Activated CD4-positive, alpha-beta memory T cell treated with anti-CD3 and anti-CD28 coated beads for 36 hours (primary cell): ENCODE measurements at regions of chr1 and their contacts with region 1.

Region 1: DNA sequence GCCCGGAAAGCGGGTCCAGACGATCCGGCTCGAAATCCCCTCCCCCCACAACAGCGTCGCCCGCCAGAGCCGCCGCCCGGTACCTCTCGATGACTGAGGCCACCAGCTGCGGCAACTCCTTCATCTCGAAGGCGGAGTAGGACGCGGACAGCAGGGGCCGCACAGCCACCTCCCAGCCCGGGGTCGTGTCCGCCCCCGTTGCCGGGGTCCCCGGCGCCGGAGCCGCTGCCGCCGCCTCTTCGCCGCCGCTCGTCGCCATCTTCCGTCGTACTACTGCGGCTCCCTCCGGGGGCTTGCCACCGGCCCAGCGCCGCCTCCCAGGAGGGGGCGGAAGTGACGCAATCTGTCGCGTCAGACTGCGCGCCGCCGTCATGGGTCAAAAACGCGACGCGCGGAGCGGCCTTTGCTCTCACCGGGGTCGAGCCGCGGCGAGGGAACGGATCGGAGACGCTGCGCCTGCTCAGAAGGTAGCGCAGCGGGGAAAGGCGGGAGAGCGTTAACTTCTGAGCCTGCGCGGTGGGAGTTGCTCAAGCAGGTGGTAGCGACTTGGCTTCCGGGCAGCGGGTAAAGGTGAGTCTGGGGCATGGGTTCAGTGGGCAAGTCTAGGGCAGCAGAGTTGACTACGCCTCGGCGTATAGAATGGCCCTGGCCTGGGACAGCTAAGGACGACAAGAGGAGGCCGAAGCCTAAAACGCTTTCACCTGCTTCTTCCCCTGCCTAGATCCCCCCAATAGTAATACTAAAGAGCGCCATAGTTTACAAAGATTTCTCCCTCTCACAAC is at the start of gene UBR4:
- DNase-seq: peak; percentile 98
- H3K4me3 Mint-ChIP-seq: peak within 1 kb of the TSS; percentile 94
- H3K27ac Mint-ChIP-seq: peak within 1 kb of the TSS; percentile 96
- H3K4me1 Mint-ChIP-seq: peaks cover 68% of the 10 kb centered on the region
- H3K27me3 Mint-ChIP-seq: no peaks in the 10 kb centered on the region
- total RNA-seq, gene UBR4: 104 to 116 TPM

Region 2: DNA sequence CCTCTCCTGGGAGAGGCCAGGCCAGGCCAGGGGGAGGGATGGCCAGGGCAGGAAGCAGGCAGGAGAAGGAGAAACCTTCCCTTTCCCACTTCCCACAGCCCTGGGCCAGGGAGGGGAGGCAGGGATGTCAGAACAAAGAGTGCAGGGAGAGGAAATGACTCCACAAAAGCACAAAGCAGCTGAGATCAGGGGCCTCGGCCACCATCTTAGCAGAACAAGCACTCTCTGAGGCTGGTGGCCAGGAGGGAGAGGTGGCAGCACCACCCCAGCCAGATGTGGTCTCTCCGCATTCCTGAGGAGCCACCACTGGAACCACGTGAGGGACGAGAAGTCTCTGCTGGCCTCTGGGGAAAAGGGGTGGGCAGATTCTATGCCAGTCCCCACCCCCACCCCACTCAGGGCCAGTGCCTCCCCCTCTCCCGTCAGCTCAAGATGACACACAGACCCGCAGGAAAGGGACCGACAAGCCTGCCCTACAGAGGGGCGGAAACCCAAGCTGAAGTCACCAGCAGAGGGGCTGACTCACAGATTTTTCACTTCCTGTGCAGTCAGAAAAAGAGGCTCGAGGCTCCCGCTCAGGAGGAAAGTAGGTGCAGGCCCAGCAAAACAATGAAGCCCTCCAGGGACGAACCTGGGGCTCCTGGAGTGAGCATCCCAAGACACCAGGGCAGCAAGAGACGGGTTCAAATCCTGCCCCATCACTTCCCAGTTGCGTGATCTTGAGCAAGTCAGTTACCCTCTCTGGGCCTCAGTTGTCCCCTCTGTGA is 283.7 kb before region 1 on chr1:
- CTCF ChIA-PET with region 1: no interaction called
- POLR2A ChIA-PET with region 1: interaction called, 6 read pairs
- intact Hi-C with region 1: loop called (anchors 5 kb)
- DNase-seq: peak; percentile 94
- H3K4me3 Mint-ChIP-seq: peak overlapping the region; percentile 79
- H3K27ac Mint-ChIP-seq: peak overlapping the region; percentile 100
- H3K4me1 Mint-ChIP-seq: peaks cover 79% of the 10 kb centered on the region
- H3K27me3 Mint-ChIP-seq: no peaks in the 10 kb centered on the region

Region 3: DNA sequence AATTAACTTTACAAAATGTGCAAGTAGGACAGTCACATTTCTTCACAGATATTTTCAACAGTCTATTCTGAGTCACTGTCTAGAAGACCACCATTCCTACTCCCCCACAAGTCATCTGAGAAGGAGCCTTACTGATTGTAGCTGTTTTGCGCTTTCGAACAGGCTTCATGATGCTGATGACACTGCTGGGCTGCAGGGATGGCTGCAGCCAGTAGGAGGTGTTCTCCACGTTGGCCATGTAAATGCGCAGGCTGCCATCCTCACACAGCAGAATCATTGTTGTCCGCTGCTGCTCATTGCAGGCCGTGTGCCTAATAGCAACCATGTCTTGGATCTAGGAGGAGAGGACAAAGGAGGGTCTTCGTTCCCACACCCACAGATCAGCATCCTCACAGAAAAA is 57.0 kb before region 1 on chr1:
- CTCF ChIA-PET with region 1: no interaction called
- POLR2A ChIA-PET with region 1: no interaction called
- intact Hi-C with region 1: no loop called
- DNase-seq: no peak
- H3K4me3 Mint-ChIP-seq: no peak overlapping the region
- H3K27ac Mint-ChIP-seq: no peak overlapping the region
- H3K4me1 Mint-ChIP-seq: no peaks in the 10 kb centered on the region
- H3K27me3 Mint-ChIP-seq: no peaks in the 10 kb centered on the region

Region 4: GRCh38 chr1:19179597-19180264 is 30.4 kb before region 1 on chr1:
- CTCF ChIA-PET with region 1: interaction called, 6 read pairs
- POLR2A ChIA-PET with region 1: interaction called, 3 read pairs
- intact Hi-C with region 1: loop called (anchors 5 kb)
- DNase-seq: peak; percentile 34
- H3K4me3 Mint-ChIP-seq: no peak overlapping the region
- H3K27ac Mint-ChIP-seq: peak overlapping the region; percentile 26
- H3K4me1 Mint-ChIP-seq: peaks cover 16% of the 10 kb centered on the region
- H3K27me3 Mint-ChIP-seq: no peaks in the 10 kb centered on the region

Region 5: DNA sequence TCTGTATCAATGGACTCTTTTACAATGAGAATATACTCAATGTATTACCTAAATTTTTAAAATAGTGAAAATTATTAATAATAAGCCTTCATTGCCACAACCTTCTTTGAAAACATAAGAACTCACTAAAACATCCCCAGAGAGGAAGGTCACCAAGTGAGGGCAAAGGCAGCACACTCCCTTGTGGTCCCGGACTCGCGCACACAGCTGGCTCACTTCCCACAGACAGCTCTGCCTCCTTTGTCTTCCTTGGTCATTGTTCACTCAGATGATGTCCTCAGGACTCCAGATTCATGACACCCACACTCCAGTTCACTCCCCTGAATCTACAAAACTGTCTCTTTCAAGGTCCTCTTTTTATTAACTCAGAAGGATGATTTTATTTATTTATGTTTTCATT is 19.0 kb after region 1 on chr1:
- CTCF ChIA-PET with region 1: no interaction called
- POLR2A ChIA-PET with region 1: no interaction called
- intact Hi-C with region 1: no loop called
- DNase-seq: no peak
- H3K4me3 Mint-ChIP-seq: no peak overlapping the region
- H3K27ac Mint-ChIP-seq: peak overlapping the region; percentile 11
- H3K4me1 Mint-ChIP-seq: peaks cover 5% of the 10 kb centered on the region
- H3K27me3 Mint-ChIP-seq: no peaks in the 10 kb centered on the region

Region 6: DNA sequence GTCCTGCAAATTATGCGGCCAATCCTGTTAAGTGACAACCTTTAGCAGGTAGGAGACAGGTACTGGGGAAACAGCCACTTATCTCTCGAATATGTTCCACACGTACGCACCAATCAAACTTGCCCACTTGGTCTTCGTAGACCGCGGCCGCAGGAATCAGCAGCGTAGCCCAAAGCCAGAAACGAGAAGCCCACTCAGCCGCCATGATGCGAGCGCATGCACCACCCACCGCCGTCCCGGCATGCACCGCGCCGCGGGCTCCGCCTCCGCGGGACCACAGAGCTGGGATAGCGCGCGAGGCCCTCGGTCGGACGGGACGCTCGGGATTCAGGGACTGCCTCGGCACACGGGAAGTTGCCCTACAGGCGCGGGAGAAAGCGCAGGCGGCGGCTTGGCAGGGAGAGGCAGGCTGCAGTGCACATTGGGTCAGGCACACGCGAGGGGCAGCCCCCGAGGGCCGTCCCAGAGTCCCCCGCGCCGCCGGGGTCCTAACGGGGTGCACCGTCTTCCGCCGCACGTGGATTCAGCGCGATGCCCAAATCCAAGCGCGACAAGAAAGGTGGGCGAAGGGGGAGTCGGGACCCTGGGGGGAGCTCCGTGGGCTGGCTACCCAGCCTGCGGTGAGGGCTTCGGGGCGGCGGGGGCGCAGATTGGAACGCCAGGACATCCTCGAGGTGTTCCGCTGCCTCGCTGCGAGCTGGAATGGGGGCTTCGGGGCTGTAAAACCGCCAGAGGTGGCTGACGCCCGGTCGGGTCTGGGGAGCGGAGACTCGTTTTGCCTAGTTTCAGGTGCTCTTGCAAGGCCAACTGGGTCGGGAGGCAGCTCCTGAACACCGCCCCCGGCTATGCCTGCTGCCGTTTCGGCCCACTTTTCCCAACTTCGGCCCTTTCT is 41.4 kb after region 1 on chr1 and contains the starts of genes EMC1 and MRTO4:
- CTCF ChIA-PET with region 1: interaction called, 4 read pairs
- POLR2A ChIA-PET with region 1: interaction called, 19 read pairs
- intact Hi-C with region 1: loop called (anchors 1 kb)
- DNase-seq: peak; percentile 92
- H3K4me3 Mint-ChIP-seq: peak within 1 kb of the TSS; percentile 98
- H3K27ac Mint-ChIP-seq: peak within 1 kb of the TSS; percentile 95
- H3K4me1 Mint-ChIP-seq: peaks cover 43% of the 10 kb centered on the region
- H3K27me3 Mint-ChIP-seq: no peaks in the 10 kb centered on the region
- total RNA-seq, gene EMC1: 46.6 to 49.3 TPM
- total RNA-seq, gene MRTO4: 83.0 to 83.8 TPM

Region 7: DNA sequence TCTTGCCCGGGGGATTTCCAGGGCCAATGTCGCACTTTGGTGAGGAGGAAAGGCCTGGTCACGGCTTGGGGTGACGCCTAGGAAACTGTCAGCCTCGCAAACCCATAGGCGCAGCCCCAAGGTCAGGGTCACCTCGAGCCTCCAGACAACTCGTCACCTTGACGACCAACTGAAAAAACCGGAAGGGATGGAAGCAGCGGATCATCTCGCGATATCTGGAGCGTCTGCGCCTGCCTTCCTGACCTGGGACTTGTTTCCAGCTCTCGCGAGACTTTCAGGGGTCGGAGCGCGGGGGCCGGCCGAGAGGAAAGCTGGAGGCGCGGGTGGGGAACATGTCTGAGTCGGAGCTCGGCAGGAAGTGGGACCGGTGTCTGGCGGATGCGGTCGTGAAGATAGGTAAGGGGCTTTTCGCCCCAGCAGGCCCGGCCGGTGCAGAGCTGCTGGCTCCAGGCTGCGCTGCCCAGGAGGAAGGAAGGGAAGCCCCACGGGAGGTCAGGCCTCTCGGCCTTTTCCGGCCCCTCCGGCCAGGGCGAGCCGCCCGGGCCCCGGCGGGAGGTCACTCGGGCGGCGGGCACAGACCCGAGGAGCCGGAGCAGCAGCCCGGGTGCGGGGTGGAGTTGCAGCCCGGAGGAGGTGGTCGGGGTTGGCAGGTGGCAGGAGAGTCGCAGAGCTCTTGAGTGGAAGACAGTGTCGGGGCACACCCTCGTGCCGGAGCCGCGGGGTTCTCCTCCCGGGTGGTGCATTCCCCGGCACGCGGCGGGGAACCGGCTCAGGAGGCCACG is 386.7 kb after region 1 on chr1:
- CTCF ChIA-PET with region 1: no interaction called
- POLR2A ChIA-PET with region 1: interaction called, 3 read pairs
- intact Hi-C with region 1: loop called (anchors 2 kb)
- DNase-seq: peak; percentile 99
- H3K4me3 Mint-ChIP-seq: peak overlapping the region; percentile 92
- H3K27ac Mint-ChIP-seq: peak overlapping the region; percentile 100
- H3K4me1 Mint-ChIP-seq: peaks cover 45% of the 10 kb centered on the region
- H3K27me3 Mint-ChIP-seq: no peaks in the 10 kb centered on the region